CD8-positive, alpha-beta T cell (primary cell): ENCODE measurements at regions of chr1 and their contacts with region 1.

Region 1: DNA sequence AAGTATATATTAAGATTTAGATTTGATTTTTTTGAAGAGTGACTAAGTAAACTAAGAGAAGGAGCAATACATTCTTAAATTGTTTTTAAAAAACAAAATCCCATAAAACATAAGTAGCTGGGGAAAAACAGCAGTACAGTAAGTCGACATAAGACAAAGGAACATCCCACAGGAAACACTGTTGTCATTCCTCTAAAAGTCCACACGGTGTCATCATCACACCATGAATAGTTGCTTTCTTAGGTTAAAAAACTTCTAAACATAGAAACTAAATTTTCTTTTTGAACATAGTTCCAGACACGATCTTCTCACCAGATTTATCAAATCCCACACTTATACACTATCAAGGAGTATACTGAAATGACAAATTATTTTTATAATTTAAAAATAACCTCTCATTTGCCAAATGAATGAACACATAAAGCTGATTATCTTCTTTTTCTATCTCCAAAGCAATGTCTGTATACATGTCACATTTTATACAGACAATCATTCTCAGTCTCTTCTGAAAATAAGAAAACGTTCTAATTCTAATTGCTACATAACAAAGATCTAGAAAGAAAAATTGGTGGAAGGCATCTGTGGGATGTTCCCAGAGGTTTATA is 15.8 kb downstream of the ODF2L start:
- DNase-seq: peak in 2 of 9 experiments; percentile 72 to 79
- ATAC-seq: peak; percentile 92
- H3K4me3 ChIP-seq: no peak overlapping the region
- H3K4me3 Mint-ChIP-seq: no peak overlapping the region
- H3K27ac ChIP-seq: no peak overlapping the region
- H3K27ac Mint-ChIP-seq: no peak overlapping the region
- H3K4me1 ChIP-seq: peaks cover 11% of the 10 kb centered on the region
- H3K4me1 Mint-ChIP-seq: peaks cover 11% of the 10 kb centered on the region
- H3K27me3 ChIP-seq: no peaks in the 10 kb centered on the region
- H3K27me3 Mint-ChIP-seq: no peaks in the 10 kb centered on the region
- CTCF ChIP-seq: peak; percentile 93

Region 2: GRCh38 chr1:86419277-86419903 is 39.0 kb after region 1 on chr1:
- CTCF ChIA-PET with region 1: interaction called, 9 read pairs
- POLR2A ChIA-PET with region 1: no interaction called
- intact Hi-C with region 1: loop called (anchors 1 to 5 kb)
- DNase-seq: peak; percentile 8 to 71 (median 48)
- ATAC-seq: peak; percentile 96
- H3K4me3 ChIP-seq: no peak overlapping the region
- H3K4me3 Mint-ChIP-seq: peak overlapping the region; percentile 64
- H3K27ac ChIP-seq: no peak overlapping the region
- H3K27ac Mint-ChIP-seq: peak overlapping the region; percentile 61
- H3K4me1 ChIP-seq: peaks cover 3% of the 10 kb centered on the region
- H3K4me1 Mint-ChIP-seq: peaks cover 5% of the 10 kb centered on the region
- H3K27me3 ChIP-seq: no peaks in the 10 kb centered on the region
- H3K27me3 Mint-ChIP-seq: peaks cover 3% of the 10 kb centered on the region
- CTCF ChIP-seq: peak; percentile 71

Region 3: DNA sequence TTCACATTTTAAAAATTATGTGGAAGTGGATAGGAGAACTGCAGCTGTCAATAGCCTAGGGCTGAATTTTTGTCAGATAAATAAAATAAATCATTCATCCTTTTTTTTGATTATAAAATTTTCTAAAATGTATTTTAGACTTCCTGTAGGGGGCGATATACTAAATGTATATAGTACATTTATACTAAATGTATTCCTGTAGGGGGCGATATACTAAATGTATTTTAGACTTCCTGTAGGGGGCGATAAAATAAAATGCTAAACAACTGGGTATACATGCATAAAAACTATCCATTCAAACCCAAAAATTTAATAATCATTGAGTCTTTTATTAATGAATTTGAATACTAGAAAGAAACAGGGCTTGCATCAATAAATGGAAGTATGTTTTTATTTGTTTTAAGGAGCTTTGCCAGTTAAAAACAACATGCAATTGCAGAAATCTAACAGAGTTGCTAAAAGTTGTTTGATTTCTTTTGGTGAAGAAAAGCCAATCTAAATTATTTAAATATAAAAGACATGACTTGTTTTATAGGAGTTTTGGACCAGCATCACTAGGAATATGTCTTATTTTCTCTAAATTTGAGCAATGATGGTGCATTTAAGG is 119.7 kb after region 1 on chr1:
- CTCF ChIA-PET with region 1: interaction called, 85 read pairs
- POLR2A ChIA-PET with region 1: no interaction called
- intact Hi-C with region 1: loop called (anchors 1 kb)
- DNase-seq: peak in 2 of 9 experiments; percentile 43 to 60
- ATAC-seq: peak; percentile 63
- H3K4me3 ChIP-seq: no peak overlapping the region
- H3K4me3 Mint-ChIP-seq: no peak overlapping the region
- H3K27ac ChIP-seq: no peak overlapping the region
- H3K27ac Mint-ChIP-seq: no peak overlapping the region
- H3K4me1 ChIP-seq: peaks cover 7% of the 10 kb centered on the region
- H3K4me1 Mint-ChIP-seq: peaks cover 8% of the 10 kb centered on the region
- H3K27me3 ChIP-seq: peaks cover 0 to 2% of the 10 kb centered on the region in 2 experiments
- H3K27me3 Mint-ChIP-seq: peaks cover 10% of the 10 kb centered on the region
- CTCF ChIP-seq: peak; percentile 100

Region 4: DNA sequence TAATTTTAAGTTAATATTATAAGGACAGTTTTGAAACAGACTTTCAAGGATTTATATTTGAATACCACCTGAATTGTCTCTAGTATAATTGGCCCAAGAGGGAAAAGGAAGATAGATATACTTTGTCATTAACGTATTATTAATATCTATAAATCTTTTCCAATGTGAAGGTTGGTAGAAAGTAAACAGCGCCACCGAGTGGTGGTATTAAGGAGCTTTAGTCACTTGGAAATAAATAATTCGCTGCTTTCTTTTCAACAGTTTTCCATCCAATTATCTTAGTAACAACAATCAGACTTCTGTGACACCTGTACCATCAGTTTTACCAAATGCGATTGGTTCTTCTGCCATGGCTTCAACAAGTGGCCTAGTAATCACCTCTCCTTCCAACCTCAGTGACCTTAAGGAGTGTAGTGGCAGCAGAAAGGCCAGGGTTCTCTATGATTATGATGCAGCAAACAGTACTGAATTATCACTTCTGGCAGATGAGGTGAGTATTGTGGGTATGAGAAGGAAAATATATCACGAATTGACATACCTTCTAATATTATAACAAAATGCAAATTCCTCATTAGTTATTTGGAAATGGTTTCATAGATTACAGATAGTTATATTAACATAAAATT is 361.7 kb after region 1 on chr1:
- CTCF ChIA-PET with region 1: interaction called, 4 read pairs
- POLR2A ChIA-PET with region 1: no interaction called
- intact Hi-C with region 1: loop called (anchors 2 to 5 kb)
- DNase-seq: peak in 6 of 9 experiments; percentile 11 to 71 (median 48)
- ATAC-seq: no peak
- H3K4me3 ChIP-seq: no peak overlapping the region
- H3K4me3 Mint-ChIP-seq: no peak overlapping the region
- H3K27ac ChIP-seq: no peak overlapping the region
- H3K27ac Mint-ChIP-seq: no peak overlapping the region
- H3K4me1 ChIP-seq: peaks cover 20% of the 10 kb centered on the region
- H3K4me1 Mint-ChIP-seq: peaks cover 4% of the 10 kb centered on the region
- H3K27me3 ChIP-seq: no peaks in the 10 kb centered on the region
- H3K27me3 Mint-ChIP-seq: no peaks in the 10 kb centered on the region
- CTCF ChIP-seq: peak; percentile 83

Region 5: GRCh38 chr1:86913896-86914634 is 533.7 kb after region 1 on chr1 and contains the start of gene SELENOF:
- CTCF ChIA-PET with region 1: no interaction called
- POLR2A ChIA-PET with region 1: no interaction called
- intact Hi-C with region 1: loop called in 1 of 2 experiments (anchors 5 kb)
- DNase-seq: peak; percentile 97 to 100 (median 99)
- ATAC-seq: peak; percentile 85
- H3K4me3 ChIP-seq: peak within 1 kb of the TSS; percentile 91 to 99
- H3K4me3 Mint-ChIP-seq: no peak within 1 kb of the TSS
- H3K27ac ChIP-seq: peak within 1 kb of the TSS; percentile 76 to 99
- H3K27ac Mint-ChIP-seq: no peak within 1 kb of the TSS
- H3K4me1 ChIP-seq: peaks cover 35% of the 10 kb centered on the region
- H3K4me1 Mint-ChIP-seq: peaks cover 50% of the 10 kb centered on the region
- H3K27me3 ChIP-seq: no peaks in the 10 kb centered on the region
- H3K27me3 Mint-ChIP-seq: no peaks in the 10 kb centered on the region
- CTCF ChIP-seq: no peak
- total RNA-seq, gene SELENOF: 74.5 to 78.6 TPM

Region 6: GRCh38 chr1:87084244-87084836 is 704.0 kb after region 1 on chr1:
- CTCF ChIA-PET with region 1: interaction called, 3 read pairs
- POLR2A ChIA-PET with region 1: no interaction called
- intact Hi-C with region 1: loop called (anchors 2 to 5 kb)
- DNase-seq: peak in 2 of 9 experiments; percentile 33 to 53
- ATAC-seq: peak; percentile 46
- H3K4me3 ChIP-seq: no peak overlapping the region
- H3K4me3 Mint-ChIP-seq: no peak overlapping the region
- H3K27ac ChIP-seq: no peak overlapping the region
- H3K27ac Mint-ChIP-seq: no peak overlapping the region
- H3K4me1 ChIP-seq: no peaks in the 10 kb centered on the region
- H3K4me1 Mint-ChIP-seq: peaks cover 4% of the 10 kb centered on the region
- H3K27me3 ChIP-seq: no peaks in the 10 kb centered on the region
- H3K27me3 Mint-ChIP-seq: no peaks in the 10 kb centered on the region
- CTCF ChIP-seq: peak; percentile 79